ENCODE measurements at regions of chr15 and their contacts with region 1.

Region 1: GRCh38 chr15:48307586-48307985 is 23.6 kb upstream of the DUT start:
- DNase-seq: no peak
- H3K4me3 Mint-ChIP-seq: no peak overlapping the region
- H3K27ac Mint-ChIP-seq: no peak overlapping the region
- H3K4me1 Mint-ChIP-seq: no peaks in the 10 kb centered on the region
- H3K27me3 Mint-ChIP-seq: peaks cover 9% of the 10 kb centered on the region

Region 2: DNA sequence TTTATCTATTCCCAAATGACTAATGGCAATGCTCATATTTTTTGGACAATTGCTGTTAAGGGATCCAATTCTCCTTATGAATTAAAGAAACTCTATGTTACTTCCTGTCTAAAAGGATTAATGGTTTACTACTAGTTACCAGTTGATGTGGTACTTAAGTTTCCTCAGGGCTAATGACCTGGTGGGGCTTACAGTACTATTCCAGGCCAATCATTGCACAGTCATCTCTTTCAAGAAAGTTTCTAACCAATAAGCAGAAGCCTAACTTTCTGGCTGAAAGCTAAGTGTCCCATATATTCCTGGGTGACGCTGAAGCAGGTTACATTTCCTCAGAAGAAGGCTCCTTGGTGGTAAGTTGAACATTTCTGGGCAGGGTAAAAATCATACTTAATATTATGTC is 101.6 kb before region 1 on chr15 and contains the start of gene SLC12A1:
- CTCF ChIA-PET with region 1: no interaction called
- DNase-seq: no peak
- H3K4me3 Mint-ChIP-seq: no peak within 1 kb of the TSS
- H3K27ac Mint-ChIP-seq: no peak within 1 kb of the TSS
- H3K4me1 Mint-ChIP-seq: no peaks in the 10 kb centered on the region
- H3K27me3 Mint-ChIP-seq: peaks cover 9% of the 10 kb centered on the region

Region 3: GRCh38 chr15:48285329-48286214 is 22.0 kb before region 1 on chr15:
- CTCF ChIA-PET with region 1: interaction called, 10 read pairs
- DNase-seq: peak; percentile 60
- H3K4me3 Mint-ChIP-seq: no peak overlapping the region
- H3K27ac Mint-ChIP-seq: no peak overlapping the region
- H3K4me1 Mint-ChIP-seq: no peaks in the 10 kb centered on the region
- H3K27me3 Mint-ChIP-seq: peaks cover 3% of the 10 kb centered on the region

Measured in activated naive CD4-positive, alpha-beta T cell treated with anti-CD3 and anti-CD28 coated beads, Interleukin-2, amount 10 ng/mL, durations not matched to agents 7 days and 5 days (primary cell).